Activated CD4-positive, alpha-beta memory T cell treated with anti-CD3 and anti-CD28 coated beads for 36 hours (primary cell): ENCODE measurements at regions of chr1 and their contacts with region 1.

Region 1: DNA sequence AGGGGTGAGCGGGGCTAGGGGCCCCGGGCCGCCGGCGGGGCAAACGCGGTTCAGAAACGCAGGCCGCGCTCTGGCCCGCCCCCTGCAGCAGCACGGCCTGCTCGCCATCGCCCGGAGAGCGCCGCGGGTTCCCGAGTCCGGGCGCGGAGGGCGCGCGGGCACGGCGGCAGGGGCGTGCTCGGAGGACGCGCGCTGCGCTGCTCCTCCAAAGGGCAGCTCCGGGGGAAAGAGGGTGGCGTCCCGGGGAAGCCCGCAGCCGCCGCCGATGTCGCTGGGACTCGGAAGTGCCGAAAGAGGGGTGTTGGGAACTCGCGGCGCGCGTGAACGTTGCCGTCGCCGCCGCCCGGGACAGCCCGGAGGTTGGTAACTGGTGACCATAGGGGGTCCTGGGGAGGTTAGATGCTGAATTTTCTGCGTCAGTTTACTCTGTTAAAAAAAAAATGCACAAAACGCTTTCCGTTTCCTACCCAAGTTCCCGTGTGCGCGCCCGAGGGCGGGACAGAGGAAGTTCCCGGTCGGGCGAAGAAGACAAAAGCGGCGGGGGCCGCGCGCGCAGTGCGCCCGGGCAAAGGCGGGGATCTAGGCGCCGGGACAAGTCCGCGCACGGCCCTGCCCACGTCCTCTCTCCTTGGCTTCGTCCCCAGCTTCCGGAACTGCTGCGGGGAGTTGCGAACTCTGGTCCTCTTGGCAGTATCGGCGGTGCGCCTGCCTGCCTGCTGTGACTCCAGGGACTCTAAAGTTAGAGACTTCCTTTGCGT is at the start of gene HHAT:
- DNase-seq: peak; percentile 76
- H3K4me3 Mint-ChIP-seq: peak within 1 kb of the TSS; percentile 89
- H3K27ac Mint-ChIP-seq: peak within 1 kb of the TSS; percentile 91
- H3K4me1 Mint-ChIP-seq: peaks cover 42% of the 10 kb centered on the region
- H3K27me3 Mint-ChIP-seq: peaks cover 5% of the 10 kb centered on the region
- total RNA-seq, gene HHAT: 1.6 to 1.8 TPM

Region 2: GRCh38 chr1:209674957-209675564 is 653.9 kb before region 1 on chr1 and contains the start of gene G0S2:
- CTCF ChIA-PET with region 1: no interaction called
- POLR2A ChIA-PET with region 1: no interaction called
- intact Hi-C with region 1: loop called (anchors 1 kb)
- DNase-seq: peak; percentile 66
- H3K4me3 Mint-ChIP-seq: peak within 1 kb of the TSS; percentile 76
- H3K27ac Mint-ChIP-seq: peak within 1 kb of the TSS; percentile 68
- H3K4me1 Mint-ChIP-seq: peaks cover 68% of the 10 kb centered on the region
- H3K27me3 Mint-ChIP-seq: peaks cover 22% of the 10 kb centered on the region
- total RNA-seq, gene G0S2: 92.7 to 93.1 TPM

Region 3: GRCh38 chr1:210311726-210312493 is 17.0 kb before region 1 on chr1:
- CTCF ChIA-PET with region 1: interaction called, 5 read pairs
- POLR2A ChIA-PET with region 1: no interaction called
- intact Hi-C with region 1: loop called (anchors 2 kb)
- DNase-seq: no peak
- H3K4me3 Mint-ChIP-seq: no peak overlapping the region
- H3K27ac Mint-ChIP-seq: no peak overlapping the region
- H3K4me1 Mint-ChIP-seq: peaks cover 6% of the 10 kb centered on the region
- H3K27me3 Mint-ChIP-seq: peaks cover 13% of the 10 kb centered on the region

Region 4: GRCh38 chr1:210373885-210374599 is 45.1 kb after region 1 on chr1:
- CTCF ChIA-PET with region 1: interaction called, 12 read pairs
- POLR2A ChIA-PET with region 1: interaction called, 30 read pairs
- intact Hi-C with region 1: loop called (anchors 1 kb)
- DNase-seq: peak; percentile 88
- H3K4me3 Mint-ChIP-seq: no peak overlapping the region
- H3K27ac Mint-ChIP-seq: peak overlapping the region; percentile 89
- H3K4me1 Mint-ChIP-seq: peaks cover 34% of the 10 kb centered on the region
- H3K27me3 Mint-ChIP-seq: no peaks in the 10 kb centered on the region

Region 5: GRCh38 chr1:211258756-211259637 is 930.1 kb after region 1 on chr1 and contains the start of gene RCOR3:
- CTCF ChIA-PET with region 1: no interaction called
- POLR2A ChIA-PET with region 1: no interaction called
- intact Hi-C with region 1: loop called (anchors 10 kb)
- DNase-seq: peak; percentile 95
- H3K4me3 Mint-ChIP-seq: peak within 1 kb of the TSS; percentile 83
- H3K27ac Mint-ChIP-seq: peak within 1 kb of the TSS; percentile 93
- H3K4me1 Mint-ChIP-seq: peaks cover 16% of the 10 kb centered on the region
- H3K27me3 Mint-ChIP-seq: no peaks in the 10 kb centered on the region
- total RNA-seq, gene RCOR3: 30.2 to 32.7 TPM